Activated CD4-positive, alpha-beta T cell treated with anti-CD3 and anti-CD28 coated beads, Interleukin-2, amount 10 ng/mL, durations not matched to agents 24 days and 14 days (primary cell): ENCODE measurements at regions of chr7 and their contacts with region 1.

Region 1: DNA sequence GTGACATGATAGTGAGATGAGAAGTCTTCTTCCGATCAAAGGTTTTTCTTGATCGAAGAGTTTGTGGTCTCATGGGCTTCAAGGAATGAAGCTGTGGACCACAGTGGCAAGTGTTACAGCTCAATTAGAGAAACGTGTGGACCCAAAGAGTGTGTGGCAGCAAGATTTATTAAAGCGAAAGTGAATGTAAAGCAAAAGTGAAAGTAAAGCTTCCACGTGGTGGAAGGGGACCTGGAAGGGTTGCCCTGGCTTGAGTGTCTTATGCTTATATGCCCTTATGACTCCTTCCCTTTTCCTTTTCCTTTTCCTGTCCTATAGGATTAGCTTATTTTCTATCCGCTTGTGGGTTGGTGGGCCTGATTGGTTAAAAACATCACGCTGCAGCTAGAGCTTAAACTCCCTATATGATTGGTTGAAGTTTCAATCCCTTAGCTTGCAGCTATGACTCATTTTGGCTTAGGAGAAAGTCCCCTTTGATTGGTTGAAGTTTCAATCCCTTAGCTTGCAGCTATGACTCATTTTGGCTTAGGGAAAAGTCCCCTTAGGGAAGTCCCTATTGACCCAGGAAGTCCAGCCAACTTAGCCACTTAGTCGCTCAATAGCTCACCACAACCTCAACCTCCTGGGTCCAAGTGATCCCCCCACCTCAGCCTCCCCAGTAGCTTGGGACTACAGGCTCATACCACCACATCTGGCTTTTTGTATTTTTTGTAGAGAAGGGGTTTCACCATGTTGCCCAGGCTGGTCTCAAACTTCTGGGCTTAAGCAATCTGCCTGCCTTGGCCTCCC is 34.7 kb downstream of the MRPS24 start:
- DNase-seq: peak; percentile 79
- H3K4me3 Mint-ChIP-seq: peak overlapping the region; percentile 73
- H3K27ac Mint-ChIP-seq: peak overlapping the region; percentile 88
- H3K4me1 Mint-ChIP-seq: peaks cover 12% of the 10 kb centered on the region
- H3K27me3 Mint-ChIP-seq: peaks cover 6% of the 10 kb centered on the region

Region 2: GRCh38 chr7:41940760-41941343 is 1893.8 kb before region 1 on chr7:
- intact Hi-C with region 1: loop called (anchors 5 kb)
- DNase-seq: peak; percentile 85
- H3K4me3 Mint-ChIP-seq: no peak overlapping the region
- H3K27ac Mint-ChIP-seq: no peak overlapping the region
- H3K4me1 Mint-ChIP-seq: peaks cover 10% of the 10 kb centered on the region
- H3K27me3 Mint-ChIP-seq: peaks cover 22% of the 10 kb centered on the region

Region 3: GRCh38 chr7:43314379-43315189 is 520.1 kb before region 1 on chr7:
- intact Hi-C with region 1: loop called (anchors 10 kb)
- DNase-seq: no peak
- H3K4me3 Mint-ChIP-seq: no peak overlapping the region
- H3K27ac Mint-ChIP-seq: no peak overlapping the region
- H3K4me1 Mint-ChIP-seq: peaks cover 11% of the 10 kb centered on the region
- H3K27me3 Mint-ChIP-seq: peaks cover 3% of the 10 kb centered on the region

Region 4: GRCh38 chr7:43582503-43583423 is 251.9 kb before region 1 on chr7 and contains the start of gene STK17A:
- intact Hi-C with region 1: loop called (anchors 1 kb)
- DNase-seq: peak; percentile 98
- H3K4me3 Mint-ChIP-seq: peak within 1 kb of the TSS; percentile 93
- H3K27ac Mint-ChIP-seq: peak within 1 kb of the TSS; percentile 98
- H3K4me1 Mint-ChIP-seq: peaks cover 29% of the 10 kb centered on the region
- H3K27me3 Mint-ChIP-seq: peaks cover 22% of the 10 kb centered on the region
- total RNA-seq, gene STK17A: 30.8 and 33.9 TPM in 2 replicates

Region 5: GRCh38 chr7:43758029-43758821 is 76.4 kb before region 1 on chr7 and contains the start of gene BLVRA:
- intact Hi-C with region 1: loop called (anchors 2 kb)
- DNase-seq: peak; percentile 93
- H3K4me3 Mint-ChIP-seq: peak within 1 kb of the TSS; percentile 80
- H3K27ac Mint-ChIP-seq: peak within 1 kb of the TSS; percentile 76
- H3K4me1 Mint-ChIP-seq: peaks cover 44% of the 10 kb centered on the region
- H3K27me3 Mint-ChIP-seq: peaks cover 3% of the 10 kb centered on the region
- total RNA-seq, gene BLVRA: 39.9 and 43.4 TPM in 2 replicates